ENCODE measurements at regions of chr19 and their contacts with region 1.

Region 1: GRCh38 chr19:19663256-19664038 is at the start of gene ATP13A1:
- DNase-seq: peak; percentile 98
- H3K4me3 ChIP-seq: peak within 1 kb of the TSS; percentile 48 to 85 (median 67)
- H3K27ac ChIP-seq: peak within 1 kb of the TSS; percentile 54
- H3K4me1 ChIP-seq: peaks cover 17% of the 10 kb centered on the region
- H3K27me3 ChIP-seq: no peaks in the 10 kb centered on the region
- CTCF ChIP-seq: no peak
- total RNA-seq, gene ATP13A1: 53.0 to 56.0 TPM

Region 2: GRCh38 chr19:19531951-19532805 is 131.3 kb before region 1 on chr19:
- CTCF ChIA-PET with region 1: no interaction called
- dilution Hi-C with region 1: loop called (anchors 5 kb)
- in situ Hi-C with region 1: no loop called
- intact Hi-C with region 1: no loop called
- DNase-seq: peak; percentile 46
- H3K4me3 ChIP-seq: no peak overlapping the region
- H3K27ac ChIP-seq: no peak overlapping the region
- H3K4me1 ChIP-seq: peaks cover 3% of the 10 kb centered on the region
- H3K27me3 ChIP-seq: no peaks in the 10 kb centered on the region
- CTCF ChIP-seq: peak; percentile 82 to 97

Region 3: GRCh38 chr19:19732579-19733501 is 69.4 kb after region 1 on chr19 and contains the start of gene ZNF14:
- CTCF ChIA-PET with region 1: no interaction called
- dilution Hi-C with region 1: no loop called
- in situ Hi-C with region 1: no loop called
- intact Hi-C with region 1: loop called (anchors 1 kb)
- DNase-seq: peak; percentile 90
- H3K4me3 ChIP-seq: peak within 1 kb of the TSS; percentile 66 to 74 (median 71)
- H3K27ac ChIP-seq: no peak within 1 kb of the TSS
- H3K4me1 ChIP-seq: no peaks in the 10 kb centered on the region
- H3K27me3 ChIP-seq: no peaks in the 10 kb centered on the region
- CTCF ChIP-seq: peak in 1 of 2 donors; percentile 33
- total RNA-seq, gene ZNF14: 3.1 to 7.2 TPM

Region 4: GRCh38 chr19:19865739-19866481 is 202.5 kb after region 1 on chr19 and contains the start of gene ZNF253:
- CTCF ChIA-PET with region 1: no interaction called
- dilution Hi-C with region 1: no loop called
- in situ Hi-C with region 1: no loop called
- intact Hi-C with region 1: loop called (anchors 5 kb)
- DNase-seq: peak; percentile 92
- H3K4me3 ChIP-seq: peak within 1 kb of the TSS; percentile 57 to 79 (median 57)
- H3K27ac ChIP-seq: no peak within 1 kb of the TSS
- H3K4me1 ChIP-seq: peaks cover 3% of the 10 kb centered on the region
- H3K27me3 ChIP-seq: no peaks in the 10 kb centered on the region
- CTCF ChIP-seq: no peak
- total RNA-seq, gene ZNF253: 5.6 to 11.5 TPM

Region 5: DNA sequence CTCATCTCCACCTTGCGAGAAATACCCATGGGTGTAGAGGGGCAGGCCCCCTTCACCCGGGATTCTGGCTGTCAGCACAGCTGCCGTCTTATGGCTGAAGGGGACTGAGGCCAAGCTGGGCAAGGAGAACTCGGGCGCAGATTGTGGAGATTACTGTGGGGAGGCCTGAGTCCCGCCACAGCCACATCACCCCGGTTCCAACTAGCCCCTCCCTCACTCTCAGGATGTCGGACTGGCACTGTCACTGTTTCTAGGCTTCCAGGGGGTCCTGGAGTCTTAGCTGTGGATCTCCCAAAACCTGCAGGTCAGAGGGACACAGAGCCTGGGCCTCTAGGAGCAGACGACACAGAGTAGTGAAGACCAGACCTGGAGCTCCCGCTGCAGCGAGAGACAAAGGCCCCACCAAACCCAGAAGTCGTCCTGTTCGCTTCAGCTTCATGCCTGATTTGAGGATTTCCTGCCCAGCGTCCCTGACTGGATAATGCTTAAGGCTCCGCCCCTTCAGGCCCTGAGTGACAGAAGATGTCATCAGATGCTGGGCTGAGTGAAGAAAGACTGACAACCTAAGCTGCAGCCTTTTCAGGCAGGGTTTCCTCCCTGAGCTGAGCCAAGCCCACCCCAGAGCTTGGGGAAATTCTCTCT is 293.1 kb after region 1 on chr19:
- CTCF ChIA-PET with region 1: no interaction called
- dilution Hi-C with region 1: no loop called
- in situ Hi-C with region 1: no loop called
- intact Hi-C with region 1: loop called (anchors 5 kb)
- DNase-seq: no peak
- H3K4me3 ChIP-seq: no peak overlapping the region
- H3K27ac ChIP-seq: no peak overlapping the region
- H3K4me1 ChIP-seq: no peaks in the 10 kb centered on the region
- H3K27me3 ChIP-seq: no peaks in the 10 kb centered on the region
- CTCF ChIP-seq: no peak

Region 6: DNA sequence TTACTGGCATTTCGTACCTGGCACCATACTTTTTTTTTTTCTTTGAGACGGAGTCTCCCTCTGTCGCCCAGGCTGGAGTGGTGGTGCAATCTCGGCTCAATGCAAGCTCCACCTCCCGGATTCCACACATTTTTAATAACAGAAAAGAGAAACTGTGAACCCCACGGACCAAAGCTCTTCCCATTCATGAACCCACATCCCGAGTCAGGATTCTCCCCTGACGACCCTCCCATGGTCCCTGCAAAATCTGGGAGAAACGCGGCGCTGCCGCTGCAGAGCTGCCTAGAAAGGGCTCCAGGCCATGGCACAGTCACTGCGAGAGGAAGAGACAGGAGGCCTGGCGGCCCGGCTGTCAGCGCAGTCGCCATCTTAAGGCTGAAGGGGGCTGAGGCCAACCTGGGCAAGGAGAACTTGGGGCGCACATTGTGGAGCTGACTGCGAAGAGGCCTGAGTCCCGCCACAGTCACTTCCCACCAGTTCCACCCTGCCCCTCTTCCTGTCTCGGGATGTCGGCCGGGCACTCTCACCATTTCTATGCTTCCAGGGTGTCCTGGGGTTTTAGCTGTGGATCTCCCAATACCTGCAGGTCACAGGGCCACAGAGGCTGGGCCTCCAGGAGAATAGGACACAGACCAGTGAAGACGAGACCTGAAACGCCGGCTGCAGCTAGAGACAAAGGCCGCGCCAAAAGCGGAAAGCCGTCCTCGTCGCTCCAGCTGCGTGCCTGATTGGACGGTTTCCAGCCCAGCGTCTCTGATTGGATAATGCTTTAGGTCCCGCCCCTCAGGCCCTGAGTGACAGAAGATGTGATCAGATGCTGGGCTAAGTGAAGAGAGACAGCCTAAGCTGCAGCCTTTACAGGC is 574.5 kb after region 1 on chr19:
- CTCF ChIA-PET with region 1: no interaction called
- dilution Hi-C with region 1: no loop called
- in situ Hi-C with region 1: no loop called
- intact Hi-C with region 1: loop called (anchors 10 kb)
- DNase-seq: peak; percentile 85
- H3K4me3 ChIP-seq: peak overlapping the region; percentile 29 to 45 (median 43)
- H3K27ac ChIP-seq: no peak overlapping the region
- H3K4me1 ChIP-seq: no peaks in the 10 kb centered on the region
- H3K27me3 ChIP-seq: no peaks in the 10 kb centered on the region
- CTCF ChIP-seq: no peak

Measured in mammary epithelial cell (primary cell).